Activated CD8-positive, alpha-beta memory T cell treated with anti-CD3 and anti-CD28 coated beads, Interleukin-2, amount 10 ng/mL, durations not matched to agents 7 days and 5 days (primary cell): ENCODE measurements at regions of chr17 and their contacts with region 1.

Region 1: GRCh38 chr17:76452660-76453430 is at the start of gene UBE2O:
- DNase-seq: peak; percentile 95
- ATAC-seq: peak; percentile 94
- H3K4me3 Mint-ChIP-seq: peak within 1 kb of the TSS; percentile 86
- H3K27ac Mint-ChIP-seq: peak within 1 kb of the TSS; percentile 54
- H3K4me1 Mint-ChIP-seq: peaks cover 34% of the 10 kb centered on the region
- H3K27me3 Mint-ChIP-seq: peaks cover 6% of the 10 kb centered on the region
- total RNA-seq, gene UBE2O: 30.2 to 34.7 TPM

Region 2: GRCh38 chr17:76408052-76408849 is 44.6 kb before region 1 on chr17:
- CTCF ChIA-PET with region 1: interaction called, 21 read pairs
- DNase-seq: peak; percentile 80
- ATAC-seq: peak; percentile 81
- H3K4me3 Mint-ChIP-seq: no peak overlapping the region
- H3K27ac Mint-ChIP-seq: no peak overlapping the region
- H3K4me1 Mint-ChIP-seq: peaks cover 4% of the 10 kb centered on the region
- H3K27me3 Mint-ChIP-seq: no peaks in the 10 kb centered on the region

Region 3: DNA sequence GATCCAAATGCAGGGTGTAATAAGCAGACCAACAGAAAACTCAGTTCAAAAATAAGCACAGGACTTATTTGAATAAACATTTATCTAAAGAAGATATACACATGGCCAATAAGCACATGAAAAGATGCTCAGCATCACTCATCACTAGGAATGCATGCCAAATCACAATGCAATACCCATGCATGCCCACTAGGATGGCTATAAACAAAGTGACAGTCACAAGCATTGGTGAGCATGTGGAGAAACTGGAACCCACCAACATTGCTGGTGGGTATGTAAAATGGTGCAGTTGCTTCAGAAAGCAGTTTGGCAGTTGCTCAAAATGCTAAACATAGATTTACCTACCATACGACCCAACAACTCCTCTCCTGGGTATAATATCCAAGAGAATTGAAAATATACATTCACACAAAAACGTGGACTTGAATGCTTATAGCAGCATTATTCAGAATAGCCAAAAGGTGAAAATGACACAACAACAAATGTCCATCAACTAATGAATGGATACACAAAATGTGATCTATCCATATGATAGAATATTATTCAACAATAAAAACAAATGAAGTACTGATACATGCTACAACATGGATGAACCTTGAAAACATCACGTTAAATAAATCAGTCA is 20.0 kb before region 1 on chr17:
- CTCF ChIA-PET with region 1: interaction called, 12 read pairs
- DNase-seq: no peak
- ATAC-seq: peak; percentile 39
- H3K4me3 Mint-ChIP-seq: no peak overlapping the region
- H3K27ac Mint-ChIP-seq: no peak overlapping the region
- H3K4me1 Mint-ChIP-seq: peaks cover 4% of the 10 kb centered on the region
- H3K27me3 Mint-ChIP-seq: no peaks in the 10 kb centered on the region

Region 4: GRCh38 chr17:76467366-76467765 is 14.5 kb after region 1 on chr17 and contains the start of gene AANAT:
- CTCF ChIA-PET with region 1: interaction called, 14 read pairs
- DNase-seq: no peak
- ATAC-seq: no peak
- H3K4me3 Mint-ChIP-seq: no peak within 1 kb of the TSS
- H3K27ac Mint-ChIP-seq: no peak within 1 kb of the TSS
- H3K4me1 Mint-ChIP-seq: peaks cover 4% of the 10 kb centered on the region
- H3K27me3 Mint-ChIP-seq: peaks cover 5% of the 10 kb centered on the region
- total RNA-seq, gene AANAT: not detected

Region 5: GRCh38 chr17:76492989-76493501 is 40.2 kb after region 1 on chr17:
- CTCF ChIA-PET with region 1: interaction called, 15 read pairs
- DNase-seq: peak; percentile 75
- ATAC-seq: peak; percentile 63
- H3K4me3 Mint-ChIP-seq: peak overlapping the region; percentile 73
- H3K27ac Mint-ChIP-seq: peak overlapping the region; percentile 98
- H3K4me1 Mint-ChIP-seq: peaks cover 57% of the 10 kb centered on the region
- H3K27me3 Mint-ChIP-seq: no peaks in the 10 kb centered on the region